ENCODE measurements at regions of chr19 and their contacts with region 1.

Region 1: GRCh38 chr19:39435499-39436349 is at the start of gene RPS16:
- DNase-seq: peak; percentile 95 to 100
- ATAC-seq: peak; percentile 80 to 88
- H3K4me3 ChIP-seq: peak within 1 kb of the TSS; percentile 80
- H3K27ac ChIP-seq: peak within 1 kb of the TSS; percentile 90 to 95
- H3K4me1 ChIP-seq: peaks cover 71% of the 10 kb centered on the region
- CTCF ChIP-seq: no peak
- EP300 ChIP-seq: no peak
- POLR2A ChIP-seq: peak; percentile 92
- RAD21 ChIP-seq: no peak
- polyA plus RNA-seq, gene RPS16: 4,855 and 5,722 TPM in 2 replicates

Region 2: DNA sequence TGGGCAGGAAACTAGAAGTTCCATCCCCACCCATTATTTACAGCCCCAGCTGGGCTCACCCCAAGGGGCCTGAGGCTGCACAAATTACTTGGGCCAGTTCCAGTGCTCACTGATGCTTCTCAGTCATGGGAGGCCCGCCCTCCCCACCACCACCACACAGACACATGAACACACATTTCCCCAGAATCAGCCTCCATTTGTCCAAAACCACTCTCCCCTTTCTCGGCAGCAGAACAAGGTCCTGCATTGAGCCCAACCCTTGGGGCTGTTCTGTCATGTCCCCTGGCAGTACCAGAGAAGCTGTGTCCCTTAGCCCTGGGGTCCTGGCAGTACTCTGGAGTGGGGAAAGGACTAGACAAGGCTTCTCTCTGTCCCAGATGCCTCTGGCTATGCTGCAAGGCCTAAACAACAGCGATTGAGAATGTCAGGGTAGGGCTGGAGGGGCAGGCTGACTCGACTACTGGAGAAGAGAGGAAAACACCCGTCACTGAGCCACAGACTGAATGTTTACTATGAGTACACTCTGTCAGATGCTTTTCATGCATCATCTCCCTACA is 71.7 kb before region 1 on chr19:
- CTCF ChIA-PET with region 1: no interaction called
- POLR2A ChIA-PET with region 1: no interaction called
- DNase-seq: no peak
- ATAC-seq: no peak; a peak in 2 of 6 replicates
- H3K4me3 ChIP-seq: no peak overlapping the region
- H3K27ac ChIP-seq: no peak overlapping the region
- H3K4me1 ChIP-seq: no peaks in the 10 kb centered on the region
- CTCF ChIP-seq: no peak
- EP300 ChIP-seq: no peak
- POLR2A ChIP-seq: no peak
- RAD21 ChIP-seq: no peak

Region 3: DNA sequence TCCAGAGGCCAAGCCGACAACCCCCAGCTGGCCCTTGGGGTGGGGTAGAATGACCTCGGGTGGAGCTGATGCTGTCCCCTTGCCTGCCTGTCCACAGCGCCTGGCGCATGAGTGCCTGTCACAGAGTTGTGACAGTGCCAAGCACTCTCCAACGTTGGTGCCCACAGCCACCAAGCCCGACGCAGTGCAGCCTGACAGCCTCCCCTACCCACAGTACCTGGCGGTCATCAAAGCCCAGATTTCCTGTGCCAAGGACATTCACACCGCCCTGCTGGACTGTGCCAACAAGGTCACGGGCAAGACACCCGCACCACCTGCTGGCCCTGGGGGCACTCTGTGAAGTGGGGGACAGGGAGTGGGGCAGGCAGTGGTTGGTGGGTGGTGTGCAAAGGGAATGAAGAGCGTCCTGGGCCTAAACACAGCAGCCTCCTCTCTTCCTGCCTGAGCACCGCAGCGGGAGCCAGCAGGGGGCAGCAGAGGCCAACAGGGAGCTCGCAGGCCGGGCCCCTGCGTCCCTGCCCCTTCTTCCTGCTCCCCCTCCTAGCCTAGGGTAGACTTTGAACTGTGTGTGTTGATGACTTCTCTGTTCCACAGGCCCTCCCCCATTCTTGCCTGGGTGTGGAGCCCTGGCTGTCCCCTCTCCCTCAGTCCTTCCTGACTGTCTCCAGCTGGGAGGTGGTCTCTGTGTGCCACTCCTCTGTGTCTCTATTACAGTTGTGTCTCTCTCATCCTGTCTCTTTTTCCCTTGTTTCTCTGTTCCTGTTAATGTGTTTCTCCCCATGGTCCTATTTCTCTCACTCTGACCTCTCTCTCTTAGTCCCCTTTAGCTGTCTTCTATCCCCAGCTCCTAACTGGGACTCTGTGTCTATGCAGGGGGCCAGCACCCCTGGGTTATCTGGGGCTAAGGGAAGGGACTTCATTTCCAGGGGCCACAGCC is 38.1 kb before region 1 on chr19:
- CTCF ChIA-PET with region 1: interaction called, 457 read pairs
- POLR2A ChIA-PET with region 1: interaction called, 140 read pairs
- DNase-seq: peak; percentile 98 to 99
- ATAC-seq: peak; percentile 52 to 84
- H3K4me3 ChIP-seq: peak overlapping the region; percentile 22; the same call in 2 of the 3 replicates
- H3K27ac ChIP-seq: peak overlapping the region; percentile 92 to 99
- H3K4me1 ChIP-seq: peaks cover 56% of the 10 kb centered on the region
- CTCF ChIP-seq: peak; percentile 100
- EP300 ChIP-seq: no peak; a peak in 1 of 5 replicates
- POLR2A ChIP-seq: peak; percentile 47; the same call in 1 of the 2 replicates
- RAD21 ChIP-seq: peak; percentile 100

Region 4: GRCh38 chr19:39463403-39463802 is 27.7 kb after region 1 on chr19:
- CTCF ChIA-PET with region 1: interaction called, 37 read pairs
- POLR2A ChIA-PET with region 1: interaction called, 11 read pairs
- DNase-seq: no peak
- ATAC-seq: no peak
- H3K4me3 ChIP-seq: no peak overlapping the region
- H3K27ac ChIP-seq: no peak overlapping the region
- H3K4me1 ChIP-seq: peaks cover 5% of the 10 kb centered on the region
- CTCF ChIP-seq: no peak
- EP300 ChIP-seq: no peak
- POLR2A ChIP-seq: no peak
- RAD21 ChIP-seq: no peak

Region 5: DNA sequence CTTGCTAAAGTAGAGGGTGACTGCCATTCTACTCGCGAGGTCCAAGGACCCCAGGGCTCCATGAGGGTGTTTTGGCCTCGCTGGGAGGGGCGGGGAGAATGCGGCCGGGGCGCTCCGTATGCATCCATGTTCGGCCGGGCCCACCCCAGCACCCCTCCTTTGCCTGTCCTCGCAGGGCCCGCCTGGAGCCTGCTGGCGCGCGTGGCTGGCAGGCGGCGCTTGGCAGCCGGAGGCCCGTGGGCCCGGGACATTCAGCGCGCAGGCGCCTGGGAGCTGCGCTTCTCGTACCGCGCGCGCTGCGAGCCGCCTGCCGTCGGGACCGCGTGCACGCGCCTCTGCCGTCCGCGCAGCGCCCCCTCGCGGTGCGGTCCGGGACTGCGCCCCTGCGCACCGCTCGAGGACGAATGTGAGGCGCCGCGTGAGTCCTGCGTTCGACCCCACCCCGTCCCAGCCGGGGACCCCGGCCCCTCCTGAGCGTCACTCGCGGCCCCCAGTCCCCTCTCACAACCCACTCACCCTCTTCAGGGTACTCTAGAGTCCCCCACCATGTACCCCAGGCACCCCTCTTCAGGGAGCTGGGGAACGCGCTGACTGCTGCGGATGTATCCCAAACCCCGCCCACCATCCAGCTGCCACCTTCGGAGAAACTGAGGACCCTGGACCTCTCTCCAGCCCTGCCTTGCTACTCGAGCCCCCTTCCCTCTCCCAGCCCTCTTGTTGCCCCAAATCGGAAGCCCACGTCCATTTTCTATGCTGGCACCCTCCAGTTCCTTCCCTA is 67.1 kb after region 1 on chr19:
- CTCF ChIA-PET with region 1: interaction called, 59 read pairs
- POLR2A ChIA-PET with region 1: interaction called, 13 read pairs
- DNase-seq: peak; percentile 94 to 97
- ATAC-seq: peak in 1 of 2 experiments; percentile 39; a peak in 4 of 6 replicates
- H3K4me3 ChIP-seq: peak overlapping the region; percentile 16; the same call in 1 of the 3 replicates
- H3K27ac ChIP-seq: peak overlapping the region; percentile 6 to 57; a peak in 2 of 6 replicates
- H3K4me1 ChIP-seq: peaks cover 25% of the 10 kb centered on the region
- CTCF ChIP-seq: peak; percentile 99
- EP300 ChIP-seq: no peak
- POLR2A ChIP-seq: no peak
- RAD21 ChIP-seq: peak in 1 of 2 experiments; percentile 58; a peak in 4 of 5 replicates

Region 6: GRCh38 chr19:39539519-39540332 is 104.0 kb after region 1 on chr19 and contains the start of gene EID2:
- CTCF ChIA-PET with region 1: interaction called, 279 read pairs
- POLR2A ChIA-PET with region 1: interaction called, 40 read pairs
- DNase-seq: peak; percentile 99
- ATAC-seq: peak; percentile 93 to 98
- H3K4me3 ChIP-seq: peak within 1 kb of the TSS; percentile 68
- H3K27ac ChIP-seq: peak within 1 kb of the TSS; percentile 88 to 89
- H3K4me1 ChIP-seq: peaks cover 15% of the 10 kb centered on the region
- CTCF ChIP-seq: peak; percentile 90
- EP300 ChIP-seq: no peak
- POLR2A ChIP-seq: peak; percentile 98
- RAD21 ChIP-seq: peak; percentile 71 to 72
- polyA plus RNA-seq, gene EID2: 23.2 and 26.1 TPM in 2 replicates

Region 7: GRCh38 chr19:39582891-39583625 is 147.3 kb after region 1 on chr19:
- CTCF ChIA-PET with region 1: no interaction called
- POLR2A ChIA-PET with region 1: no interaction called
- DNase-seq: no peak
- ATAC-seq: no peak; a peak in 1 of 6 replicates
- H3K4me3 ChIP-seq: no peak overlapping the region
- H3K27ac ChIP-seq: no peak overlapping the region
- H3K4me1 ChIP-seq: no peaks in the 10 kb centered on the region
- CTCF ChIP-seq: no peak
- EP300 ChIP-seq: no peak
- POLR2A ChIP-seq: no peak
- RAD21 ChIP-seq: no peak

Region 8: GRCh38 chr19:39833464-39834286 is 398.0 kb after region 1 on chr19 and contains the start of gene DYRK1B:
- CTCF ChIA-PET with region 1: no interaction called
- POLR2A ChIA-PET with region 1: interaction called, 20 read pairs
- DNase-seq: peak; percentile 100
- ATAC-seq: peak; percentile 90 to 95
- H3K4me3 ChIP-seq: peak within 1 kb of the TSS; percentile 73
- H3K27ac ChIP-seq: peak within 1 kb of the TSS; percentile 81 to 87
- H3K4me1 ChIP-seq: peaks cover 17% of the 10 kb centered on the region
- CTCF ChIP-seq: no peak
- EP300 ChIP-seq: no peak; a peak in 1 of 5 replicates
- POLR2A ChIP-seq: peak; percentile 40
- RAD21 ChIP-seq: no peak
- polyA plus RNA-seq, gene DYRK1B: 13.8 and 17.3 TPM in 2 replicates